Activated CD4-positive, alpha-beta memory T cell treated with anti-CD3 and anti-CD28 coated beads for 36 hours (primary cell): ENCODE measurements at regions of chr7 and their contacts with region 1.

Region 1: GRCh38 chr7:155738652-155739537 is 73.4 kb downstream of the SHH start:
- DNase-seq: peak; percentile 83
- H3K4me3 Mint-ChIP-seq: no peak overlapping the region
- H3K27ac Mint-ChIP-seq: peak overlapping the region; percentile 39
- H3K4me1 Mint-ChIP-seq: peaks cover 51% of the 10 kb centered on the region
- H3K27me3 Mint-ChIP-seq: no peaks in the 10 kb centered on the region

Region 2: DNA sequence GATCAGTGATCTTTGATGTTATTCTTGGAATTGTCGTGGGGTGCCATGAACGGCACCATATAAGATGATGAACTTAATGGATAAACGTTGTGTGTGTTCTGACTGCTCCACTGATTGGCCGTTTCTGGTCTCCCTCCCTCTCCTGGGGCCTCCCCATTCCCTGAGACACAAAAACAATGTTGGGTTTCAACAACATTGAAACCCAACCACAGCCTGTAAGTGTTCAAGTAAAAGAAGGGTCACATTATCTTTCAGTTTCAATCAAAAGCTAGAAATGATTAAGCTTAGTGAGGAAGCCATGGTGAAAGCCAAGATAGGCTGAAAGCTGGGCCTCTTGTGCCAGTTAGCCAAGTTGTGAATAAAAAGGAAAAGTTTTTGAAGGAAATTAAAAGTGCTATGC is 261.4 kb before region 1 on chr7:
- CTCF ChIA-PET with region 1: no interaction called
- POLR2A ChIA-PET with region 1: no interaction called
- intact Hi-C with region 1: loop called (anchors 10 kb)
- DNase-seq: peak; percentile 41
- H3K4me3 Mint-ChIP-seq: no peak overlapping the region
- H3K27ac Mint-ChIP-seq: no peak overlapping the region
- H3K4me1 Mint-ChIP-seq: peaks cover 14% of the 10 kb centered on the region
- H3K27me3 Mint-ChIP-seq: peaks cover 69% of the 10 kb centered on the region

Region 3: DNA sequence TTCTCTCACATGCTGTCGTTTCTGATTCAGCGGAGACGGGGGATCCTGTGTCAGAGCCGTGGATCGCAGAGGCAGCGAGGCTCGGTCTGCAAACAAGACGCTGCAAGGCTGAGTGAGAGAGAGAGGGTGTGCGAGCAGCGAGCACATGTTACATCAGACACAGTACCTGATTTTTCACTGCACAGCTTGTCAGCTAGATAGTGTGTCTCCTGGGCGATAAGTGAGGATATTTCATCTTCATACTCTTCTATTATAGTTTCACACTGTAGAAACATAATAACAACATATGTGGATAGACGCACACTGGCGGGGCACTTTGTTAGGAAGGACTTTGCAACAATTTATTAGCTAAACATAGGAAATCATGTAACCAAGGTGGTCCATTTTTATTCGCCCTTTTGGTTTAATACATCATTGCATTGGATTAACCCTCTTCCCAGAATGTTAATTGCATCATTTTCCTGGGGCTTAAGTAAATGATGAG is 232.0 kb before region 1 on chr7:
- CTCF ChIA-PET with region 1: no interaction called
- POLR2A ChIA-PET with region 1: no interaction called
- intact Hi-C with region 1: no loop called
- DNase-seq: peak; percentile 27
- H3K4me3 Mint-ChIP-seq: no peak overlapping the region
- H3K27ac Mint-ChIP-seq: no peak overlapping the region
- H3K4me1 Mint-ChIP-seq: peaks cover 15% of the 10 kb centered on the region
- H3K27me3 Mint-ChIP-seq: peaks cover 76% of the 10 kb centered on the region

Region 4: DNA sequence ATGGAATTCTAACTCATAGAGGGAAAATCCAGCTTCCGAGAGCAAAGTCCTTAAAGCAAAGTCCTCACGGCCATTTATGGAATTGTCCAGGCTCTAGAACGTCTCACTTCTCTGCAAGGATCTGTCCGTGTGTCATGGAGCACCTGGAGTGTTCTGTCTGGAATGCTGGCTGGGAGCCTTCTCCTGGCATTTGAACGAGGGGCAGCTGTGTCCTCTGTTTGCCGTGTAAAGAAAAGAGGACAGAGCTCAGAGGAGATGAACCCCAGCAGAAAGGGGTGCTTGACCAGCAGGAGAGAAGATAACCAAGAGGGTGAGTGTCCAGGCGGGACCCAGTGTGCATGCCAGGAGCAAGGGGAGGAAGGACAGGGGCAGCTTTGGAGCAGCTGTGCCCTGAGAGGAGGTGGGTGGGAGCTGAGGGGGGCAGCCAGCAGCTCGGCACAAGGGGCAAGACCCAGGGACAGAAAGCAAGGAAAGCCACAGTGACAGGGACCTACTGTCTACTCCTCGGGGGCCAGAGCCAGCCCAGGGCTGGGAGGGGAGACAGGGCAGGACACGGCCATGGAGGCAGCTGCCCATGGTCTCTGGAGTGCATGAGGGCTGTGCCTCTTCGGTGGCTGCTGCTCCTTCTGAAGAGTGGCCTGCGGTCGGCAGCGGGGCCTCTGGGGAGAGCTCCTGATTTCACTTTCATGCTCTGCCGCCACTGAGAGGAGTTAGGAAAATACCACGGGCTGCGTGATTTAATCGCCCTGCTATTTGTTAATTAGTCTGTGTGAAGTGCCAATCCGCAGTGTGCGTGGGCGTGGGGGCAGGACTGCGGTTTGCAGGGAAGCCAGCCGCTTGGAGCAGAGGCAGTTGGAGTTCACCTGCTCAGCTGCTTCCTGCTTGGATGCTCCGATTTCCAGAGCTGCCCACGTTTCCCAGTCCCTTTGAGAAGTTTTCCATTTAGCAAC is 222.6 kb after region 1 on chr7:
- CTCF ChIA-PET with region 1: no interaction called
- POLR2A ChIA-PET with region 1: no interaction called
- intact Hi-C with region 1: no loop called
- DNase-seq: peak; percentile 58
- H3K4me3 Mint-ChIP-seq: no peak overlapping the region
- H3K27ac Mint-ChIP-seq: no peak overlapping the region
- H3K4me1 Mint-ChIP-seq: peaks cover 23% of the 10 kb centered on the region
- H3K27me3 Mint-ChIP-seq: peaks cover 26% of the 10 kb centered on the region